B cell (primary cell): ENCODE measurements at regions of chr6 and their contacts with region 1.

Region 1: GRCh38 chr6:152124429-152125074 is 317.1 kb downstream of the ESR1 start:
- DNase-seq: peak; percentile 59
- ATAC-seq: peak; percentile 57
- H3K4me3 ChIP-seq: no peak overlapping the region
- H3K4me3 Mint-ChIP-seq: no peak overlapping the region
- H3K27ac ChIP-seq: no peak overlapping the region
- H3K27ac Mint-ChIP-seq: no peak overlapping the region
- H3K4me1 ChIP-seq: no peaks in the 10 kb centered on the region
- H3K4me1 Mint-ChIP-seq: peaks cover 2% of the 10 kb centered on the region
- H3K27me3 ChIP-seq: no peaks in the 10 kb centered on the region
- H3K27me3 Mint-ChIP-seq: no peaks in the 10 kb centered on the region
- CTCF ChIP-seq: peak; percentile 75

Region 2: GRCh38 chr6:151681433-151682059 is 443.0 kb before region 1 on chr6:
- CTCF ChIA-PET with region 1: interaction called, 27 read pairs
- POLR2A ChIA-PET with region 1: no interaction called
- intact Hi-C with region 1: no loop called
- DNase-seq: peak; percentile 37
- ATAC-seq: peak; percentile 51
- H3K4me3 ChIP-seq: peak overlapping the region in 3 of 5 experiments; percentile 0 to 33 (median 18)
- H3K4me3 Mint-ChIP-seq: peak overlapping the region; percentile 58
- H3K27ac ChIP-seq: no peak overlapping the region
- H3K27ac Mint-ChIP-seq: no peak overlapping the region
- H3K4me1 ChIP-seq: peaks cover 5 to 10% of the 10 kb centered on the region in 2 donors
- H3K4me1 Mint-ChIP-seq: peaks cover 13% of the 10 kb centered on the region
- H3K27me3 ChIP-seq: peaks cover 0 to 3% (median 0%) of the 10 kb centered on the region in 4 experiments
- H3K27me3 Mint-ChIP-seq: no peaks in the 10 kb centered on the region
- CTCF ChIP-seq: no peak

Region 3: GRCh38 chr6:151690768-151691562 is 433.6 kb before region 1 on chr6:
- CTCF ChIA-PET with region 1: interaction called, 87 read pairs
- POLR2A ChIA-PET with region 1: no interaction called
- intact Hi-C with region 1: loop called (anchors 1 kb)
- DNase-seq: peak; percentile 82
- ATAC-seq: peak; percentile 84
- H3K4me3 ChIP-seq: peak overlapping the region in 4 of 5 experiments; percentile 15 to 64 (median 41)
- H3K4me3 Mint-ChIP-seq: peak overlapping the region; percentile 75
- H3K27ac ChIP-seq: peak overlapping the region; percentile 65 to 76
- H3K27ac Mint-ChIP-seq: peak overlapping the region; percentile 91
- H3K4me1 ChIP-seq: peaks cover 19 to 20% of the 10 kb centered on the region in 2 donors
- H3K4me1 Mint-ChIP-seq: peaks cover 23% of the 10 kb centered on the region
- H3K27me3 ChIP-seq: no peaks in the 10 kb centered on the region
- H3K27me3 Mint-ChIP-seq: no peaks in the 10 kb centered on the region
- CTCF ChIP-seq: no peak

Region 4: DNA sequence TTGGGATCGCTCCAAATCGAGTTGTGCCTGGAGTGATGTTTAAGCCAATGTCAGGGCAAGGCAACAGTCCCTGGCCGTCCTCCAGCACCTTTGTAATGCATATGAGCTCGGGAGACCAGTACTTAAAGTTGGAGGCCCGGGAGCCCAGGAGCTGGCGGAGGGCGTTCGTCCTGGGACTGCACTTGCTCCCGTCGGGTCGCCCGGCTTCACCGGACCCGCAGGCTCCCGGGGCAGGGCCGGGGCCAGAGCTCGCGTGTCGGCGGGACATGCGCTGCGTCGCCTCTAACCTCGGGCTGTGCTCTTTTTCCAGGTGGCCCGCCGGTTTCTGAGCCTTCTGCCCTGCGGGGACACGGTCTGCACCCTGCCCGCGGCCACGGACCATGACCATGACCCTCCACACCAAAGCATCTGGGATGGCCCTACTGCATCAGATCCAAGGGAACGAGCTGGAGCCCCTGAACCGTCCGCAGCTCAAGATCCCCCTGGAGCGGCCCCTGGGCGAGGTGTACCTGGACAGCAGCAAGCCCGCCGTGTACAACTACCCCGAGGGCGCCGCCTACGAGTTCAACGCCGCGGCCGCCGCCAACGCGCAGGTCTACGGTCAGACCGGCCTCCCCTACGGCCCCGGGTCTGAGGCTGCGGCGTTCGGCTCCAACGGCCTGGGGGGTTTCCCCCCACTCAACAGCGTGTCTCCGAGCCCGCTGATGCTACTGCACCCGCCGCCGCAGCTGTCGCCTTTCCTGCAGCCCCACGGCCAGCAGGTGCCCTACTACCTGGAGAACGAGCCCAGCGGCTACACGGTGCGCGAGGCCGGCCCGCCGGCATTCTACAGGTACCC is 316.8 kb before region 1 on chr6 and contains the start of gene ESR1:
- CTCF ChIA-PET with region 1: no interaction called
- POLR2A ChIA-PET with region 1: no interaction called
- intact Hi-C with region 1: no loop called
- DNase-seq: peak; percentile 53
- ATAC-seq: peak; percentile 68
- H3K4me3 ChIP-seq: peak within 1 kb of the TSS in 4 of 5 experiments; percentile 27 to 56 (median 46)
- H3K4me3 Mint-ChIP-seq: peak within 1 kb of the TSS; percentile 89
- H3K27ac ChIP-seq: no peak within 1 kb of the TSS
- H3K27ac Mint-ChIP-seq: no peak within 1 kb of the TSS
- H3K4me1 ChIP-seq: peaks cover 20 to 22% of the 10 kb centered on the region in 2 donors
- H3K4me1 Mint-ChIP-seq: peaks cover 23% of the 10 kb centered on the region
- H3K27me3 ChIP-seq: peaks cover 0 to 31% (median 24%) of the 10 kb centered on the region in 4 experiments
- H3K27me3 Mint-ChIP-seq: peaks cover 45% of the 10 kb centered on the region
- CTCF ChIP-seq: no peak
- total RNA-seq, gene ESR1: 3.7 and 5.9 TPM in 2 replicates